AG04450 (cell line): ENCODE measurements at regions of chr2 and their contacts with region 1.

Region 1: GRCh38 chr2:224369028-224369632 is 32.8 kb downstream of the FAM124B start:
- DNase-seq: no peak
- H3K4me3 ChIP-seq: no peak overlapping the region
- H3K27ac ChIP-seq: no peak overlapping the region
- H3K27me3 ChIP-seq: no peaks in the 10 kb centered on the region
- CTCF ChIP-seq: peak; percentile 71

Region 2: GRCh38 chr2:224357098-224357901 is 11.8 kb before region 1 on chr2:
- CTCF ChIA-PET with region 1: interaction called, 19 read pairs
- POLR2A ChIA-PET with region 1: no interaction called
- DNase-seq: peak; percentile 30
- H3K4me3 ChIP-seq: no peak overlapping the region
- H3K27ac ChIP-seq: no peak overlapping the region
- H3K27me3 ChIP-seq: peaks cover 2% of the 10 kb centered on the region
- CTCF ChIP-seq: peak; percentile 74

Region 3: GRCh38 chr2:224386876-224387275 is 17.7 kb after region 1 on chr2:
- CTCF ChIA-PET with region 1: interaction called, 11 read pairs
- POLR2A ChIA-PET with region 1: no interaction called
- DNase-seq: no peak
- H3K4me3 ChIP-seq: no peak overlapping the region
- H3K27ac ChIP-seq: no peak overlapping the region
- H3K27me3 ChIP-seq: no peaks in the 10 kb centered on the region
- CTCF ChIP-seq: no peak

Region 4: GRCh38 chr2:224570328-224570993 is 201.3 kb after region 1 on chr2:
- CTCF ChIA-PET with region 1: no interaction called
- POLR2A ChIA-PET with region 1: no interaction called
- DNase-seq: peak; percentile 15
- H3K4me3 ChIP-seq: no peak overlapping the region
- H3K27ac ChIP-seq: no peak overlapping the region
- H3K27me3 ChIP-seq: no peaks in the 10 kb centered on the region
- CTCF ChIP-seq: no peak

Region 5: GRCh38 chr2:224585205-224586088 is 216.3 kb after region 1 on chr2 and contains the start of gene CUL3:
- CTCF ChIA-PET with region 1: interaction called, 11 read pairs
- POLR2A ChIA-PET with region 1: no interaction called
- DNase-seq: peak; percentile 96
- H3K4me3 ChIP-seq: peak within 1 kb of the TSS; percentile 91
- H3K27ac ChIP-seq: peak within 1 kb of the TSS; percentile 57
- H3K27me3 ChIP-seq: no peaks in the 10 kb centered on the region
- CTCF ChIP-seq: no peak
- polyA plus RNA-seq, gene CUL3: 55.2 and 57.3 TPM in 2 replicates

Region 6: GRCh38 chr2:224650815-224651439 is 281.8 kb after region 1 on chr2:
- CTCF ChIA-PET with region 1: interaction called, 17 read pairs
- POLR2A ChIA-PET with region 1: no interaction called
- DNase-seq: peak; percentile 11
- H3K4me3 ChIP-seq: no peak overlapping the region
- H3K27ac ChIP-seq: no peak overlapping the region
- H3K27me3 ChIP-seq: peaks cover 3% of the 10 kb centered on the region
- CTCF ChIP-seq: peak; percentile 84